CD8-positive, alpha-beta T cell (primary cell): ENCODE measurements at regions of chr16 and their contacts with region 1.

Region 1: DNA sequence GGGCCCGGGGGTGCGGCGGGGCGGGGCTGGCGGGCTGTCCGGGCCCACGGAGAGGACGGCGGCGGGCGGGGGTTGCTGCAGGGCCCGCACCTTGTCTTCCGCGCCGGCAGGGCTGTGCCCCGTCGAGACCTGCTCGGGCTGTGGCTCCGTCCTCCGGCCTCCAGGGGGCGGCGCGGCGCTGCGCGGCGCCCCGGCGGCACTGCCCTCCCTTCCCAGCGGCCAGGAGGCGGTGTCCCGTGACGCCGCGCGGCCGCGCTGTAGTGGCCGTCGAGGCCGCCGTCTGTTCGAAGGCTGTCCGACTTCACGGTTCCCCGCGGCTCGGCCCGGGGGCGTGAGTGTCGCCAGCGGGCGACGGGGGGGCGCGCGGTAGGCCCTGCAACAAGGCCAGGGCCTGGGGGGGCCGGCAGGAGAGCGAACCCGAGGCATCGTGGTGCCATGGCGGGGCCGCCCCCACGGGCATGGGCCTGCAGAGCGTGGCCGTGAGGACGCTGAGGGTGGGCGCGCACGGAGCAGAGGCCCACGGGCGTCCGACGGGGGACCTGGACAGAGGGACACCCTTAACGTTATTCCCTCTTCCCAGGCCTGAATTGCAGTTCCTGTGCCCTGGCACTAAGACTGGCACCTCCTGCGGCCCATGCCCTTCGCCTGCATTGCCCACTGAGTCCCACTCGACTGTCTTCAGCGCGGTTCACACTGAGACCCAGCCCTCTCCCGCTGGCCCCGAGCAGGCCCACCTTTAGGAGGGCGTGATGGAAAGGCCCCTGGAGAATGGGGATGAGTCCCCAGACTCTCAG is at the start of gene PLEKHG4:
- DNase-seq: peak; percentile 58 to 90 (median 80)
- ATAC-seq: peak; percentile 97
- H3K4me3 ChIP-seq: peak within 1 kb of the TSS; percentile 64 to 84
- H3K4me3 Mint-ChIP-seq: peak within 1 kb of the TSS; percentile 82
- H3K27ac ChIP-seq: peak within 1 kb of the TSS; percentile 43 to 53
- H3K27ac Mint-ChIP-seq: peak within 1 kb of the TSS; percentile 66
- H3K4me1 ChIP-seq: peaks cover 21% of the 10 kb centered on the region
- H3K4me1 Mint-ChIP-seq: peaks cover 17% of the 10 kb centered on the region
- H3K27me3 ChIP-seq: no peaks in the 10 kb centered on the region
- H3K27me3 Mint-ChIP-seq: no peaks in the 10 kb centered on the region
- CTCF ChIP-seq: peak; percentile 60
- total RNA-seq, gene PLEKHG4: 11.3 to 13.7 TPM

Region 2: GRCh38 chr16:67226804-67227557 is 52.5 kb before region 1 on chr16 and contains the start of gene TMEM208:
- CTCF ChIA-PET with region 1: no interaction called
- POLR2A ChIA-PET with region 1: no interaction called
- intact Hi-C with region 1: loop called (anchors 1 to 2 kb)
- DNase-seq: peak; percentile 95 to 99 (median 98)
- ATAC-seq: peak; percentile 98
- H3K4me3 ChIP-seq: peak within 1 kb of the TSS; percentile 95 to 100
- H3K4me3 Mint-ChIP-seq: peak within 1 kb of the TSS; percentile 100
- H3K27ac ChIP-seq: peak within 1 kb of the TSS; percentile 83 to 93
- H3K27ac Mint-ChIP-seq: peak within 1 kb of the TSS; percentile 98
- H3K4me1 ChIP-seq: peaks cover 26% of the 10 kb centered on the region
- H3K4me1 Mint-ChIP-seq: peaks cover 47% of the 10 kb centered on the region
- H3K27me3 ChIP-seq: no peaks in the 10 kb centered on the region
- H3K27me3 Mint-ChIP-seq: no peaks in the 10 kb centered on the region
- CTCF ChIP-seq: no peak
- total RNA-seq, gene TMEM208: 37.1 to 44.7 TPM

Region 3: GRCh38 chr16:67268136-67268579 is 11.3 kb before region 1 on chr16:
- CTCF ChIA-PET with region 1: interaction called, 10 read pairs
- POLR2A ChIA-PET with region 1: no interaction called
- intact Hi-C with region 1: no loop called
- DNase-seq: no peak
- ATAC-seq: no peak
- H3K4me3 ChIP-seq: no peak overlapping the region
- H3K4me3 Mint-ChIP-seq: no peak overlapping the region
- H3K27ac ChIP-seq: no peak overlapping the region
- H3K27ac Mint-ChIP-seq: no peak overlapping the region
- H3K4me1 ChIP-seq: no peaks in the 10 kb centered on the region
- H3K4me1 Mint-ChIP-seq: no peaks in the 10 kb centered on the region
- H3K27me3 ChIP-seq: no peaks in the 10 kb centered on the region
- H3K27me3 Mint-ChIP-seq: peaks cover 2% of the 10 kb centered on the region
- CTCF ChIP-seq: no peak

Region 4: DNA sequence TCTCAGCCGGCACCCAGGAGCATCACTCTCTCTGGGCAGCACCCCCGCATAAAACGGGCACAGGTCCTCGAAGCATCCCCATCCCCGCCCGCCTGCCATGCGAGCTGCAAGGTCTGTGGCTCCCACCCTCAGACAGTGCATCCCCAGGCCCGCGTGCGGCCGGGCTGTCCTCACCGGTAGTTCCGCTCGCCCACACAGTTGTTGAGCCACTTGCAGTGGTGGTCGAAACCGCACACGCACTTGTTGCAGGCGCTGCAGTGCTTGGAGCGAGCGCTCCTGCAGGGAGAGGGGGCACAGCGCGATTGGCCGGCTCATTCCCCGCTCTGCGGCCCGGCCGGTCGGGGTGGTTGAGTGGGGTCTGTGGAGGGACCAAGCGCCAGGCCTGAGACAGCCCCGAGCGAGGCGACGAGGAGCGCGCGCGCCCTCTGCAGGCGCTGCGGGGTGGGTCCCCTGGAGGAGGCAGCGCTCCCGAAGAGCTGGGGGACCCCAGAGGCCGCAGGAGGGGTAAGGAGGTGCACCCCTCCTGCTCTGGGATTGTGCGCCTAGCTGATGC is 119.8 kb after region 1 on chr16:
- CTCF ChIA-PET with region 1: no interaction called
- POLR2A ChIA-PET with region 1: no interaction called
- intact Hi-C with region 1: loop called in 1 of 2 experiments (anchors 1 kb)
- DNase-seq: peak in 6 of 9 experiments; percentile 11 to 66 (median 51)
- ATAC-seq: peak; percentile 81
- H3K4me3 ChIP-seq: no peak overlapping the region
- H3K4me3 Mint-ChIP-seq: no peak overlapping the region
- H3K27ac ChIP-seq: no peak overlapping the region
- H3K27ac Mint-ChIP-seq: no peak overlapping the region
- H3K4me1 ChIP-seq: peaks cover 7% of the 10 kb centered on the region
- H3K4me1 Mint-ChIP-seq: peaks cover 5% of the 10 kb centered on the region
- H3K27me3 ChIP-seq: peaks cover 6 to 11% of the 10 kb centered on the region in 2 experiments
- H3K27me3 Mint-ChIP-seq: peaks cover 13% of the 10 kb centered on the region
- CTCF ChIP-seq: peak; percentile 67

Region 5: GRCh38 chr16:67468731-67469130 is 189.2 kb after region 1 on chr16:
- CTCF ChIA-PET with region 1: no interaction called
- POLR2A ChIA-PET with region 1: no interaction called
- intact Hi-C with region 1: loop called in 1 of 2 experiments (anchors 5 kb)
- DNase-seq: no peak
- ATAC-seq: no peak
- H3K4me3 ChIP-seq: no peak overlapping the region
- H3K4me3 Mint-ChIP-seq: no peak overlapping the region
- H3K27ac ChIP-seq: no peak overlapping the region
- H3K27ac Mint-ChIP-seq: no peak overlapping the region
- H3K4me1 ChIP-seq: no peaks in the 10 kb centered on the region
- H3K4me1 Mint-ChIP-seq: peaks cover 53% of the 10 kb centered on the region
- H3K27me3 ChIP-seq: no peaks in the 10 kb centered on the region
- H3K27me3 Mint-ChIP-seq: no peaks in the 10 kb centered on the region
- CTCF ChIP-seq: no peak